GM12878 (cell line): ENCODE measurements at regions of chr3 and their contacts with region 1.

Region 1: DNA sequence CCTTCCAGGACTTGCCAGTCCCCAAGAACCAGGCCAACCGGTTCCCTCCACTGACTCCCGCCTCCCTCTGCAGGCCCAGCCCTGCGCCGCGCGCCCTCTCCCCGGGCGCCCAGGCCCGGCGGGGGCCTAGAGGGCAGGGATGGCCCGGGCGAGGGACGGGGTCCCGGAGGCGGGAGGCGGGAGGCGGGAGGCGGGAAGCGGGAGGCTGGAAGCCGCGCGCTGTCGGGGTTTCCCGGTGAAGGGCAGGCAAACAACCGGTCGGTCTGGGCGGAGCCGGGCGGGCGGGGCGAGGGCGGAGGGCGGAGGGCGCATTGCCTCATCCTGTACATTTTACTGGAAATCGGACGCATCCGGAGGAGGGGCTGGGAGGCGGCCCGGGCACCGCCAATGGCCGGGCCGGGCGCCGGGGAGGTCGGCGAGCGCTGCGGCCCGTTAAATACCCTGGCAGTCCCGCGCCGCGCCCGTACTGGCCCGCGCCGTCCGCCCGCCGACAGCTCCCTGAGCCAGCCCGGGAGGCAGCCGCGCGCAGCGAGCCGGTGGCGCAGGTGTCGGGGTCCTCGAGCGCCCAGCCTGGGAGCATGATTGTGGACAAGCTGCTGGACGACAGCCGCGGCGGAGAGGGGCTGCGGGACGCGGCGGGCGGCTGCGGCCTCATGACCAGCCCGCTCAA is at the start of gene NFKBIZ:
- DNase-seq: no peak
- ATAC-seq: peak; percentile 78
- H3K4me3 ChIP-seq: peak within 1 kb of the TSS; percentile 75
- H3K27ac ChIP-seq: peak within 1 kb of the TSS; percentile 93
- H3K4me1 ChIP-seq: peaks cover 16% of the 10 kb centered on the region
- H3K27me3 ChIP-seq: no peaks in the 10 kb centered on the region
- CTCF ChIP-seq: no peak
- EP300 ChIP-seq: no peak
- POLR2A ChIP-seq: peak; percentile 95
- RAD21 ChIP-seq: no peak
- polyA plus RNA-seq, gene NFKBIZ: 6.3 to 8.9 TPM

Region 2: DNA sequence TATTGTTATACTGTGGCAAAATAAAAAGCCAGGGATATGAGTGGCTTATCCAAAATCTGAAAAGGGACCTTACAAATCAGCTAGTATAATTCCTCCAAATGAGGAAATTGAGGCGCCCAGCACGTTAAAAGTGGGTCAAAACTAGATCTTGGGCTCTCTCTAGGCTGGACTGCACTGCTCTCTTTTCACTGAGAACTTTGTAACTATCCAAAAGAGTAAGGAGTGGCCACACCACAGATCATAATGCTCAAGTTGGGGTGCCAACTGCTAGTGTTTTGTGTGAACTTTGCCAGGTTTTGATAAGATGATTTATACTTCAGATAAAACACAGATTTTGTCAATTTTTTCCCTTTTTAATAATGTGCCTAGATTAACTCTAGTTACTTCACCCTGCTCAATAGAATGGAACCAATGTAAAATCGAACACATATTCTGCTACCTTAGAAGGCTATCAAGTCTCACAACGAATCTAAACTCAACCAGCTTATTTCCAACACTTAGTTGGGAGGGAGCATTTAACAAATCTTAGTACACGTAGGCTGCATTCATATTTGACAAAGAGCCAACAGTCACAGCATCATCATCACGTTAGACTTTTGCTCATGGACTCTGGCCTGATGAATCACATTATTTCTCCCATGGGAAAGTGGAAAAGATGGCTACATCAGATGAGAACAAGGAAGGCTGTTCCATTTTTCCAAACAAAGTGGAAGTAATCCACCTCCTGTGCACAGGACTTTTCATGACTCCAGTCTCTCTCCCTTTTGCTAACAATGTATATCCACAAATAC is 920.4 kb before region 1 on chr3:
- CTCF ChIA-PET with region 1: no interaction called
- POLR2A ChIA-PET with region 1: no interaction called
- RAD21 ChIA-PET with region 1: no interaction called
- SMC1A ChIA-PET with region 1: no interaction called
- in situ Hi-C with region 1: no loop called
- intact Hi-C with region 1: no loop called
- DNase-seq: no peak
- ATAC-seq: no peak
- H3K4me3 ChIP-seq: no peak overlapping the region
- H3K27ac ChIP-seq: no peak overlapping the region
- H3K4me1 ChIP-seq: no peaks in the 10 kb centered on the region
- H3K27me3 ChIP-seq: no peaks in the 10 kb centered on the region
- CTCF ChIP-seq: no peak
- EP300 ChIP-seq: no peak
- POLR2A ChIP-seq: no peak
- RAD21 ChIP-seq: no peak

Region 3: GRCh38 chr3:101819758-101820157 is 29.4 kb before region 1 on chr3:
- CTCF ChIA-PET with region 1: interaction called, 17 read pairs
- POLR2A ChIA-PET with region 1: interaction called, 8 read pairs
- RAD21 ChIA-PET with region 1: interaction called, 14 read pairs
- SMC1A ChIA-PET with region 1: interaction called, 72 read pairs
- in situ Hi-C with region 1: no loop called
- intact Hi-C with region 1: no loop called
- DNase-seq: no peak
- ATAC-seq: peak; percentile 93
- H3K4me3 ChIP-seq: no peak overlapping the region
- H3K27ac ChIP-seq: no peak overlapping the region
- H3K4me1 ChIP-seq: peaks cover 24% of the 10 kb centered on the region
- H3K27me3 ChIP-seq: no peaks in the 10 kb centered on the region
- CTCF ChIP-seq: no peak
- EP300 ChIP-seq: peak in 1 of 2 experiments; percentile 47; a peak in 1 of 4 replicates
- POLR2A ChIP-seq: no peak
- RAD21 ChIP-seq: no peak

Region 4: GRCh38 chr3:101836652-101837598 is 12.3 kb before region 1 on chr3:
- CTCF ChIA-PET with region 1: interaction called, 10 read pairs
- POLR2A ChIA-PET with region 1: interaction called, 66 read pairs
- RAD21 ChIA-PET with region 1: interaction called, 44 read pairs
- SMC1A ChIA-PET with region 1: interaction called, 61 read pairs
- in situ Hi-C with region 1: no loop called
- intact Hi-C with region 1: no loop called
- DNase-seq: no peak
- ATAC-seq: peak; percentile 35
- H3K4me3 ChIP-seq: peak overlapping the region; percentile 32; the same call in 1 of the 2 replicates
- H3K27ac ChIP-seq: 0 out of 2 replicates have a peak overlapping the region, but pooled peaks have one; percentile 27
- H3K4me1 ChIP-seq: peaks cover 40% of the 10 kb centered on the region
- H3K27me3 ChIP-seq: no peaks in the 10 kb centered on the region
- CTCF ChIP-seq: no peak
- EP300 ChIP-seq: peak in 1 of 2 experiments; percentile 19; a peak in 1 of 4 replicates
- POLR2A ChIP-seq: no peak
- RAD21 ChIP-seq: no peak

Region 5: GRCh38 chr3:101902041-101902440 is 52.9 kb after region 1 on chr3:
- CTCF ChIA-PET with region 1: interaction called, 6 read pairs
- POLR2A ChIA-PET with region 1: interaction called, 10 read pairs
- RAD21 ChIA-PET with region 1: interaction called, 12 read pairs
- SMC1A ChIA-PET with region 1: interaction called, 33 read pairs
- in situ Hi-C with region 1: no loop called
- intact Hi-C with region 1: loop called (anchors 2 kb)
- DNase-seq: no peak
- ATAC-seq: peak; percentile 42
- H3K4me3 ChIP-seq: no peak overlapping the region
- H3K27ac ChIP-seq: no peak overlapping the region
- H3K4me1 ChIP-seq: peaks cover 26% of the 10 kb centered on the region
- H3K27me3 ChIP-seq: no peaks in the 10 kb centered on the region
- CTCF ChIP-seq: no peak
- EP300 ChIP-seq: no peak
- POLR2A ChIP-seq: no peak
- RAD21 ChIP-seq: no peak

Region 6: DNA sequence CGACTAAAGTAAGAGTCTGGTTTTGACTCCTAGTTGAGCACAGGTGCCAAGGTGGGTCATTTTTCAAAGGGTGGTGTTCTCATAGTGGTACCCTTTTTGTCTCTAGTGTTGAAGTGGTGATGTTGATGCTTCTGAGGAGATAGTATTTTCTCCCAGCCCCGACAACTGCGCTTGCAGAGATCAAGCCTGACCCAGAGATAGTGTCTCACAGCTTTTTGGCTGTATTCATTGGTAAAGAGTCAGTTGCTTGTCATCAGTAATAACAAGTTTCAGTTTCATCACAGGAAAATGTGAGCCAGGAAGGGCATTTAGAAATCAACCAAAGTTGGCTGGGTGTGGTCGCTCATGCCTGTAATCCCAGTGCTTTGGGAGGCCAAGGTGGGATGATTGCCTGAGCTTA is 139.4 kb after region 1 on chr3:
- CTCF ChIA-PET with region 1: interaction called, 3 read pairs
- POLR2A ChIA-PET with region 1: no interaction called
- RAD21 ChIA-PET with region 1: interaction called, 5 read pairs
- SMC1A ChIA-PET with region 1: interaction called, 6 read pairs
- in situ Hi-C with region 1: no loop called
- intact Hi-C with region 1: loop called (anchors 2 kb)
- DNase-seq: no peak
- ATAC-seq: peak; percentile 65
- H3K4me3 ChIP-seq: no peak overlapping the region
- H3K27ac ChIP-seq: peak overlapping the region; percentile 59
- H3K4me1 ChIP-seq: peaks cover 28% of the 10 kb centered on the region
- H3K27me3 ChIP-seq: no peaks in the 10 kb centered on the region
- CTCF ChIP-seq: no peak
- EP300 ChIP-seq: 0 out of 4 replicates have a peak, but pooled peaks of 1 of the 2 experiments have one; percentile 30
- POLR2A ChIP-seq: no peak
- RAD21 ChIP-seq: no peak